Tibial artery (tissue), 4 donors: ENCODE measurements at regions of chr11 and their contacts with region 1.

Region 1: DNA sequence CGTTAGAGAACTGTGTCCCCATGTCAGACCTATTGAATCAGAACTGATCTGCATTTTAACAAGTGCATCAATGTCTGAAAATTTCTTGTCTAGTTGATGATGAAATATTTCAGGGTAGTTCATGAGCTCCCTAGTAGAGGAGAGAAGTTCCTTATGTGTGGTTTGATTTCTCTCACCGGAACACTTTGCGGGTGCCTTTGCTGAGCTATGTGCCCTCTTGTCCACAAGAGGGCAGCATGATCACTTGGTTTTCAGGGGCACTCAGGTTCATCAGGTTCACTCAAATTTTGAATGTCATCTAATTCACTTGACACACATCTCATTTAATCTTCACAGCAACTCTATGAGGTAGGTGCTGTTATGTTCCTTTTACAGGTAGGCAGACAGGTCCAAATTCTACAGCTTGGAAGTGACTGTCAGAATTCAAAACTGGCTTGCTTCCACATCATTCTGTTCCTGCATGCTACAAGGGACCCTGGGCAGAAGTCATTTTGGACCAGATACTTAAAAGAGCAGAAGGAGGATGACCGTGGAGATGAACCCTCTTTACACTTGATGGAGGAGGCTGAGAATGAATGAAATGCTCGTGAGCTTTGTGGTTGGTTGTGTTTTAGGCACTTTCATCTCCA is 55.6 kb downstream of the P4HA3 start:
- DNase-seq: peak; percentile 53 to 71
- H3K4me3 ChIP-seq: no peak overlapping the region
- H3K27ac ChIP-seq: no peak overlapping the region
- H3K4me1 ChIP-seq: peaks cover 0 to 18% (median 12%) of the 10 kb centered on the region in 4 donors
- H3K27me3 ChIP-seq: no peaks in the 10 kb centered on the region
- CTCF ChIP-seq: peak; percentile 92

Region 2: GRCh38 chr11:74321487-74322188 is 65.8 kb after region 1 on chr11:
- intact Hi-C with region 1: loop called (anchors 10 kb)
- DNase-seq: peak; percentile 37 to 66
- H3K4me3 ChIP-seq: no peak overlapping the region
- H3K27ac ChIP-seq: peak overlapping the region; percentile 46 to 57
- H3K4me1 ChIP-seq: peaks cover 0 to 72% (median 33%) of the 10 kb centered on the region in 4 donors
- H3K27me3 ChIP-seq: no peaks in the 10 kb centered on the region
- CTCF ChIP-seq: peak; percentile 19 to 48

Region 3: GRCh38 chr11:74388678-74389327 is 132.9 kb after region 1 on chr11:
- intact Hi-C with region 1: loop called (anchors 10 kb)
- DNase-seq: peak in 1 of 2 donors; percentile 75
- H3K4me3 ChIP-seq: no peak overlapping the region
- H3K27ac ChIP-seq: no peak overlapping the region
- H3K4me1 ChIP-seq: no peaks in the 10 kb centered on the region
- H3K27me3 ChIP-seq: no peaks in the 10 kb centered on the region
- CTCF ChIP-seq: peak; percentile 69 to 70

Region 4: DNA sequence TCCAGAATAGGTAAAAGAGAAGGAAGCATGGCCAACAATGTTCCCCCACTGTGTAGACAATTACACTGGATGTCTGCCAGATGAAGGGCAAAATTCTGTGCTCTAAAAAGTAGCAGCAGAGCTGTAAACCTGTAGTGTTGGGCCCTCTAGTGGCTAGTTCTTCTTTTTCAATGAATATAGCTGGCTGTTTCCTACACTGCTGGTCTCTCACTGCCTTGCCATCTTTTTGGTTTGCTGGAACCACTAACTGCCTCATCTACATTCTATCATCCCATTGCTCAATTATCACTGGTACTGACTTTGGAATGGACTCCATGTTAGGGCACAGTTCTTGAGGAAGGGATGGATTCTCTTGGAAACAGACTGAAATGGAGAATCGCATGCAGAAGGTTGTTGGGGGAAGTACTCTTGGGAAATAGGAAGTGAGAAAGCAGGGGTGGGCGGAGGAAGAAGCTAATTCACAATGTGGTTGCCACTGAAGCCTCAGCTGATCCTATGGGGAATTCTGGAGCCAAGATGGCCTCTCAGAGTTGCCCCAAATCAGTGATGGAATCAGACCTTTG is 193.6 kb after region 1 on chr11:
- intact Hi-C with region 1: loop called (anchors 5 kb)
- DNase-seq: peak in 1 of 2 donors; percentile 29
- H3K4me3 ChIP-seq: no peak overlapping the region
- H3K27ac ChIP-seq: no peak overlapping the region
- H3K4me1 ChIP-seq: peaks cover 0 to 2% (median 0%) of the 10 kb centered on the region in 4 donors
- H3K27me3 ChIP-seq: peaks cover 0 to 7% of the 10 kb centered on the region in 2 donors
- CTCF ChIP-seq: peak; percentile 60 to 86

Region 5: GRCh38 chr11:75126564-75126963 is 870.7 kb after region 1 on chr11:
- intact Hi-C with region 1: no loop called
- DNase-seq: no peak
- H3K4me3 ChIP-seq: no peak overlapping the region
- H3K27ac ChIP-seq: no peak overlapping the region
- H3K4me1 ChIP-seq: no peaks in the 10 kb centered on the region
- H3K27me3 ChIP-seq: peaks cover 0 to 16% of the 10 kb centered on the region in 2 donors
- CTCF ChIP-seq: no peak